Caco-2 (cell line): ENCODE measurements at regions of chr12 and their contacts with region 1.

Region 1: GRCh38 chr12:49842519-49843352 is at the start of gene BCDIN3D:
- DNase-seq: peak; percentile 94
- H3K4me3 ChIP-seq: peak within 1 kb of the TSS; percentile 59
- H3K4me3 Mint-ChIP-seq: peak within 1 kb of the TSS; percentile 93
- H3K27ac Mint-ChIP-seq: peak within 1 kb of the TSS; percentile 92
- H3K4me1 ChIP-seq: peaks cover 7% of the 10 kb centered on the region; the same call in 1 of the 2 replicates
- H3K4me1 Mint-ChIP-seq: peaks cover 24% of the 10 kb centered on the region
- H3K27me3 ChIP-seq: no peaks in the 10 kb centered on the region
- H3K27me3 Mint-ChIP-seq: no peaks in the 10 kb centered on the region
- CTCF ChIP-seq: no peak
- total RNA-seq, gene BCDIN3D: 5.7 and 6.6 TPM in 2 replicates

Region 2: GRCh38 chr12:49776413-49776812 is 66.3 kb before region 1 on chr12:
- CTCF ChIA-PET with region 1: interaction called, 11 read pairs
- POLR2A ChIA-PET with region 1: no interaction called
- intact Hi-C with region 1: loop called (anchors 1 kb)
- DNase-seq: peak; percentile 76 to 84
- H3K4me3 ChIP-seq: no peak overlapping the region
- H3K4me3 Mint-ChIP-seq: no peak overlapping the region
- H3K27ac Mint-ChIP-seq: peak overlapping the region; percentile 37
- H3K4me1 ChIP-seq: no peaks in the 10 kb centered on the region
- H3K4me1 Mint-ChIP-seq: peaks cover 10% of the 10 kb centered on the region
- H3K27me3 ChIP-seq: no peaks in the 10 kb centered on the region
- H3K27me3 Mint-ChIP-seq: peaks cover 8% of the 10 kb centered on the region
- CTCF ChIP-seq: peak; percentile 86 to 93